A549 (cell line): ENCODE measurements at regions of chr18 and their contacts with region 1.

Region 1: DNA sequence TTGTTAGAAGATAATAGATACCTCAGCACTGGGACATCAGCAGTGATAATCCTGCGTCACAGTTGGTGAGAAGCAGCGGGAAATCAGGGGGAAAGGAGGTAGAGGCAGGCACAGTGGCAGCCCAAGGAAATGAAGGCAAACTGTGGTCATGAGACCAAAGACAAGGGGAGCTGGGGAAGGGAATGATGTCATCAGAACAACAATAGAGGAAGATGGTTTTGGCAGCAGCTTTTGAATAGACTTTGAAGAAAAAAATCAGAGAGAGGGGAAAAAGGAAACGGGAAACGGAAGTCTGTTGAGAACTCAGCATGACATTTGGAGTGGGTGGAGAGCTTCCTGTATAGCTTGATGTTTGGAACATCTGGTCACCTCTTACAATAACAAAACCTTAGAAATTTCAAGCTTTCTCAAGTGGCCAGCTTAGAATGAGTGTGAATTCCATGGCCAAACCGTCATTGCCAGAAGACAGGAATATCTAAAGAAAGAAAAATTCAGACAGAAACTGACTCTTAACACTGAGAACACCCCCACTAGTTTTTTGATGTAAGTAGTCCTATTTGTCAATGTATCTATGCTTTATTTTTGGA is 18.4 kb upstream of the YES1 start:
- DNase-seq: no peak
- ATAC-seq: no peak
- H3K4me3 ChIP-seq: no peak overlapping the region
- H3K27ac ChIP-seq: no peak overlapping the region
- H3K4me1 ChIP-seq: 0 out of 3 replicates have a peak, but pooled peaks cover 4% of the 10 kb centered on the region
- CTCF ChIP-seq: no peak
- EP300 ChIP-seq: no peak
- POLR2A ChIP-seq: no peak
- RAD21 ChIP-seq: no peak

Region 2: GRCh38 chr18:616380-616995 is 213.9 kb before region 1 on chr18:
- CTCF ChIA-PET with region 1: interaction called, 13 read pairs
- POLR2A ChIA-PET with region 1: no interaction called
- DNase-seq: peak; percentile 36 to 47
- ATAC-seq: peak; percentile 54 to 55; a peak in 2 of 6 replicates
- H3K4me3 ChIP-seq: no peak overlapping the region
- H3K27ac ChIP-seq: no peak overlapping the region
- H3K4me1 ChIP-seq: no peaks in the 10 kb centered on the region
- CTCF ChIP-seq: peak; percentile 68
- EP300 ChIP-seq: no peak
- POLR2A ChIP-seq: no peak
- RAD21 ChIP-seq: peak; percentile 80 to 83

Region 3: DNA sequence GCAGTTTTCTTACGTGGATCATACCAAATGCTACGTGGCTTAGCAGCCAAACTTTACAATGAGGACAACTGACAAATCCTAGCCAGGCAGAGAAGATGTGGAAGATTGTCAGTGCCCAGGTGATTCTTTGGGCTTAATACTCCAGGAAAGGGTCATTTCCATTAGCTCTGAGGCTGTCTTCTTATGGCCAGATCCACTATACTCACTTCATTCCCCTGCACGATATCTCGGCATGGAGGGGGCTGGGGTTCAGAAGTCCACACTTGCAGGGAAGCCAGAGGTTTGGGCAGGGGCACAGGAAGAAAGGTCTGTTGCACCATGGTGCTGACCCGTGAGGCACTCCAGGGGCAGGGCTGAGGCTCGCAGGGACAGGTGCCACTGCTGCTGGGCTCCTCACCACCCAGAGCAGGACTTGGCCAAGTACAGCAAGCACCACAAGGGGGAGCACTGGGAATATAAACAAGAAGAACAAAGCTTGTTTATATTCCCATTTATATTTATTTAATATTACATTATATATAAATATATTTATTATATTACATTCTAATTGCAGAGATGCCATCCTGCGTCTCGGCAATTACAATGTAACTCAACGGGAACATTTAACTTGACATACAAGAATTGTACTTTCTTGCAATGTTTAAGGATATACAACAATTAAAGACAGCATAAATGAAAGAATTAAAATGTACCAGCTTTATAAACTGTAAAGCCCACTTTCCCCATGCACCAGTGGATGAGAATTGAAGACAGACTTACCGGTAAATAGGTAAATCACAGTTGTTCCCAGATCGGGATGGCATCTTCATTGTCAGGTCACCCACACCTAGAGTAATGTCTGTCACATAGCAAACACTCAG is 206.4 kb before region 1 on chr18:
- CTCF ChIA-PET with region 1: interaction called, 94 read pairs
- POLR2A ChIA-PET with region 1: interaction called, 3 read pairs
- DNase-seq: peak; percentile 18 to 73
- ATAC-seq: peak; percentile 89 to 93
- H3K4me3 ChIP-seq: no peak overlapping the region
- H3K27ac ChIP-seq: no peak overlapping the region
- H3K4me1 ChIP-seq: no peaks in the 10 kb centered on the region
- CTCF ChIP-seq: peak; percentile 62
- EP300 ChIP-seq: no peak
- POLR2A ChIP-seq: no peak
- RAD21 ChIP-seq: peak; percentile 62 to 63

Region 4: GRCh38 chr18:741931-742512 is 88.4 kb before region 1 on chr18:
- CTCF ChIA-PET with region 1: interaction called, 85 read pairs
- POLR2A ChIA-PET with region 1: no interaction called
- DNase-seq: peak; percentile 37 to 47
- ATAC-seq: peak; percentile 54 to 73; a peak in 5 of 6 replicates
- H3K4me3 ChIP-seq: no peak overlapping the region
- H3K27ac ChIP-seq: no peak overlapping the region
- H3K4me1 ChIP-seq: no peaks in the 10 kb centered on the region
- CTCF ChIP-seq: peak; percentile 62
- EP300 ChIP-seq: no peak
- POLR2A ChIP-seq: no peak
- RAD21 ChIP-seq: peak; percentile 70 to 72